Vagina (tissue), 2 donors: ENCODE measurements at regions of chrX and their contacts with region 1.

Region 1: GRCh38 chrX:96094616-96095015 is 590.0 kb upstream of the DIAPH2 start:
- DNase-seq: no peak
- H3K4me3 ChIP-seq: no peak overlapping the region
- H3K27ac ChIP-seq: no peak overlapping the region
- H3K4me1 ChIP-seq: no peaks in the 10 kb centered on the region
- H3K27me3 ChIP-seq: no peaks in the 10 kb centered on the region
- CTCF ChIP-seq: no peak
- POLR2A ChIP-seq: no peak

Region 2: GRCh38 chrX:94252211-94252610 is 1842.4 kb before region 1 on chrX:
- intact Hi-C with region 1: loop called (anchors 10 kb)
- DNase-seq: no peak
- H3K4me3 ChIP-seq: no peak overlapping the region
- H3K27ac ChIP-seq: no peak overlapping the region
- H3K4me1 ChIP-seq: no peaks in the 10 kb centered on the region
- H3K27me3 ChIP-seq: no peaks in the 10 kb centered on the region
- CTCF ChIP-seq: no peak
- POLR2A ChIP-seq: no peak

Region 3: DNA sequence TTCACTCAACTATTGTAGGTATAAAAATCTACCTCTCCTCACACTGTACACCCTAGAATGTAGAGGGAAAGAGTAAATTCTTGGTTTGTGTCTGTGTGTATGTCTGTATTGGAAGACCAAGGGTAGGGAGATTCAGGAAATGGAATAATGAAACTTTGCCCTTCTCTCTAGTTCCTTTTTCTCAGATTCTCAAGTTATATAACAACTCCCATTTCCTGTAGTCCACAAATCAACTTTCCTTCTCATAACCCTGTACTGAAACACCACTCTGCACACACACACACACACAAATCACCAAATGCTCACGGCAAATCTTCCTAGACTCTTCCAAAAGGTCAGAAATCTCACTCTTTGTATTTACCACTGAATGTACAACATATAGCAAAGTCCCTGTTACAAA is 234.5 kb before region 1 on chrX:
- intact Hi-C with region 1: no loop called
- DNase-seq: no peak
- H3K4me3 ChIP-seq: no peak overlapping the region
- H3K27ac ChIP-seq: no peak overlapping the region
- H3K4me1 ChIP-seq: no peaks in the 10 kb centered on the region
- H3K27me3 ChIP-seq: no peaks in the 10 kb centered on the region
- CTCF ChIP-seq: no peak
- POLR2A ChIP-seq: no peak